ENCODE measurements at regions of chr4 and their contacts with region 1.

Region 1: DNA sequence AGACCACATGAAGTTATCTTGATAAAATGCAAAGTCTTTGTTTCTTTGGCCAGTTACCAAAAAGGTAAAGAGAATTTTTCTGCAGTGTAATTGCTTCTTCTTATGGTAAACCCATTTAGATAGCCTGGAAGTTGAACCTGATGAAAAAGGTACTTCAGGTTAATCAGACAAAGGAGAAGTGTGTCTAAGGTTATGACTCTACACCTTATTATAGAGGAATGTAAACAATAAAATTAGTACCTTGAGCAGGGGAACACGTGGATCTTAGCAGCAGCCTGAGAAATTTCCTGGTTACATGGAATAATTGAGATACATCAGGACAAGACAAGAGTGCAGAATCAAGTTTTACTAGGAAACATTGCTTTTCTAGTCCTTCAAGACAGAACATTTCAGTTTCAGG is 70.8 kb downstream of the RAP1GDS1 start:
- DNase-seq: no peak
- H3K4me3 ChIP-seq: no peak overlapping the region
- H3K4me3 Mint-ChIP-seq: no peak overlapping the region
- H3K27ac Mint-ChIP-seq: no peak overlapping the region
- H3K4me1 ChIP-seq: no peaks in the 10 kb centered on the region
- H3K4me1 Mint-ChIP-seq: no peaks in the 10 kb centered on the region
- H3K27me3 ChIP-seq: no peaks in the 10 kb centered on the region
- H3K27me3 Mint-ChIP-seq: no peaks in the 10 kb centered on the region
- CTCF ChIP-seq: no peak

Region 2: DNA sequence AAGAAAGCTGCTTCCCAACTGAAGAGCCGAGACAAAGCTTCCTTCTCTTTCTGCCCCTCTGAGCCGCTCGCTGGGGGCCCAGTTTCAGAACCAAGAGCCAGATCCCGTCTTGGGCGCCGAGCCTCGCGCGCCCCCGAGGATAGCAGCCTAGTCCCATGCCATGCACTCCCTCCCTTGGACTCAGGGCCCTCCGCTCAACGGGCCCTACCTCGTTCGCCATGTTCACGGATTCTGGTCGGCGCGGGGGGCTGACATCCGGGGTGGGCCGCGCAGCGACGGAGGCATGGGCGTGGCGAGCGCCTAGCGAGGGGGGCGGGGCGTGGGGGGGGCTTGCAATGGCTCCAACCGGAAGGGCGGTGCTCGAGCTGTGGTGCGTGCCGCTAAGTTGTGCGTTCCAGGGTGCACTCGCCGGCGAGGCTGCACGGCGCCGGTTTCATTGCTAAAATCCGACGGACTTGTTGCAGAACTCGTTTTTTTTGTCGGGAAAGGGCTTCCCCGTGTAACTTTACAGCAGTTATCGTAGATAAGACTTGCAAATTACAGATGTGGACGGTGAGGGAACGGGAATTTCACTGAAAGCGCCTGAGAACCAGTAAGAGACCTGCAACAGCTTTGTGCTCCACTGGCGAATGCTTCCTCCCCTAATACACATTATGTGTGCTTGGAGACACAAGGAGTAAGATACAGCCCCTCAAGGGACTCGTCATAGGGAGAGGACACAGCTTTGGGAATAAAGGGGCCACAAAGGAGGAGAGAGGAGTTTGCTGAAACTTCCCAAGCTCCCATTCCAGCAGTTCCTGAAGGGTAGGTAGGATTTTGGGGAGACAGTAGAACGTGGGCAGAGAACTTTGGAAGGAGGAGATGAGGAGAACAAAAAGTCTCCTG is 756.7 kb after region 1 on chr4 and contains the start of gene ADH5:
- CTCF ChIA-PET with region 1: no interaction called
- POLR2A ChIA-PET with region 1: interaction called, 13 read pairs
- intact Hi-C with region 1: no loop called
- DNase-seq: peak; percentile 80 to 85
- H3K4me3 ChIP-seq: peak within 1 kb of the TSS; percentile 83
- H3K4me3 Mint-ChIP-seq: peak within 1 kb of the TSS; percentile 98
- H3K27ac Mint-ChIP-seq: peak within 1 kb of the TSS; percentile 98
- H3K4me1 ChIP-seq: peaks cover 13% of the 10 kb centered on the region
- H3K4me1 Mint-ChIP-seq: peaks cover 29% of the 10 kb centered on the region
- H3K27me3 ChIP-seq: no peaks in the 10 kb centered on the region
- H3K27me3 Mint-ChIP-seq: no peaks in the 10 kb centered on the region
- CTCF ChIP-seq: no peak
- total RNA-seq, gene ADH5: 144 and 161 TPM in 2 replicates

Measured in Caco-2 (cell line).